Dorsolateral prefrontal cortex (tissue), 120 donors: ENCODE measurements at regions of chr2 and their contacts with region 1.

Region 1: GRCh38 chr2:218876562-218877219 is 4.0 kb upstream of the WNT10A start:
- DNase-seq: peak in 9 of 10 donors; percentile 51 to 85 (median 69)
- H3K4me3 ChIP-seq: no peak overlapping the region
- H3K27ac ChIP-seq: no peak overlapping the region
- H3K27me3 ChIP-seq: peaks cover 0 to 89% (median 61%) of the 10 kb centered on the region in 45 donors
- CTCF ChIP-seq: peak; percentile 83 to 99 (median 94)

Region 2: DNA sequence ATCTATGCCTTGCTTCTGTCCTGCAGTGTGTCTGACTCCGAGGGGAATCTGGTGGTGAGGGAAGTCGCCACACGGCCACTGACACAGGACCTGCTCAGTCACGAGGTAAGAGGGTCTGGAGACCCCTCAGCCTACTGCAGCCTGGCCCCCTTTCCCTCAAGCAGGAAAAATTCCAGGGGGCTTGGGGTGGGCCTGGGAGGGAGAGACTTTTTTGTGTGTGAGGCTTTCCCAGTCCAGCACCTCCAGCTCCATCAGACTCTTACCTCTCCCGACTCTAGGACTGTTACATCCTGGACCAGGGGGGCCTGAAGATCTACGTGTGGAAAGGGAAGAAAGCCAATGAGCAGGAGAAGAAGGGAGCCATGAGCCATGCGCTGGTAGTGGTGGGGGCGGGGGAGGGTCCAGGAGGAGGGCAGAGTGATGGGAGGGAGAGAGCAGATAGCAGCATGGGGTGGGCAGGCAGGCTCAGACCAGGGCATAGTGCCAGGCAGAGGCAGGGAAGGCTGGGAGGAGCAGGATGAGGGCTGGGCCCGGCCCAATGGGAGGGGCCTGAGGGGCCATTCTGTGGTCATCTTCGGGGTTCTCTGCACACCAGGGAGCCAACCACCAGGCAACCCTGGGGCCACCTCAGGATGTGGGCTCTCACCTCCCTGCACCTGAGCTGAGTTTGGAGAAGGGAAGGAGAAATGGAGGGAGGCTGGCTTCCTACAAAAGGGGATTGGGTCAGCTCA is 447.0 kb before region 1 on chr2:
- intact Hi-C with region 1: no loop called
- DNase-seq: peak in 4 of 10 donors; percentile 10 to 31 (median 20)
- H3K4me3 ChIP-seq: no peak overlapping the region
- H3K27ac ChIP-seq: no peak overlapping the region
- H3K27me3 ChIP-seq: no peaks in the 10 kb centered on the region
- CTCF ChIP-seq: no peak

Region 3: GRCh38 chr2:218557941-218558340 is 318.8 kb before region 1 on chr2:
- intact Hi-C with region 1: no loop called
- DNase-seq: no peak
- H3K4me3 ChIP-seq: no peak overlapping the region
- H3K27ac ChIP-seq: no peak overlapping the region
- H3K27me3 ChIP-seq: no peaks in the 10 kb centered on the region
- CTCF ChIP-seq: no peak

Region 4: DNA sequence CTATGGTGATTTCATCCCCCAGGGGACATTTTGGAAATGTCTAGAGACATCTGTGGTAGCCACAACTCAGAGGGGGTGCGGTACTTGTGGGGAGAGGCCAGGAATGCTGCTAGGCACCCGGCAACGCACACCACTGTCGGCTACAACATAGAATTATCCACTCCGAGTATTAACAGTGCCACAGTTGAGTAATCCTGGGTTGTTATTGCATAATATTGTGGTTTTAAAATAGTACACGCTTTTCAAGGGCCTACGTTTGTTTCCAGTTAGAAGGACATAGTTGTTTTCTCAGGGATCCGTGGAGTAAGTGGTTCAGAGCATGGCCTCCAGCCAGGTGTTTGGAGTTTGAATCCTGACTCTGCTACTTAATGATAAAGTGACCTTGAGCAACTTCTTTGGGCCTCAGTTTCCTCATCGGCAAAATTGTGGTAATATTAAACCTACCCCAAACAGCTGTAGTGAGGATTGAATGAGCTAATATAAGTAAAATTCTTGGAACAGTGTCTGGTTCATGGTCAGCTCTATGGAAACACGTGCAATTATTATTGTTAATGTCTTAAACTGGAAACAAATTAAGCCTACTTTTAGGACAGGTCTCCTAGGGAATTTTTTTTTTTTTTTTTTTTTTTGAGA is 70.2 kb before region 1 on chr2:
- intact Hi-C with region 1: no loop called
- DNase-seq: no peak
- H3K4me3 ChIP-seq: peak overlapping the region in 3 of 59 donors; percentile 9 to 14 (median 12)
- H3K27ac ChIP-seq: peak overlapping the region in 41 of 59 donors; percentile 1 to 78 (median 48)
- H3K27me3 ChIP-seq: no peaks in the 10 kb centered on the region
- CTCF ChIP-seq: no peak

Region 5: DNA sequence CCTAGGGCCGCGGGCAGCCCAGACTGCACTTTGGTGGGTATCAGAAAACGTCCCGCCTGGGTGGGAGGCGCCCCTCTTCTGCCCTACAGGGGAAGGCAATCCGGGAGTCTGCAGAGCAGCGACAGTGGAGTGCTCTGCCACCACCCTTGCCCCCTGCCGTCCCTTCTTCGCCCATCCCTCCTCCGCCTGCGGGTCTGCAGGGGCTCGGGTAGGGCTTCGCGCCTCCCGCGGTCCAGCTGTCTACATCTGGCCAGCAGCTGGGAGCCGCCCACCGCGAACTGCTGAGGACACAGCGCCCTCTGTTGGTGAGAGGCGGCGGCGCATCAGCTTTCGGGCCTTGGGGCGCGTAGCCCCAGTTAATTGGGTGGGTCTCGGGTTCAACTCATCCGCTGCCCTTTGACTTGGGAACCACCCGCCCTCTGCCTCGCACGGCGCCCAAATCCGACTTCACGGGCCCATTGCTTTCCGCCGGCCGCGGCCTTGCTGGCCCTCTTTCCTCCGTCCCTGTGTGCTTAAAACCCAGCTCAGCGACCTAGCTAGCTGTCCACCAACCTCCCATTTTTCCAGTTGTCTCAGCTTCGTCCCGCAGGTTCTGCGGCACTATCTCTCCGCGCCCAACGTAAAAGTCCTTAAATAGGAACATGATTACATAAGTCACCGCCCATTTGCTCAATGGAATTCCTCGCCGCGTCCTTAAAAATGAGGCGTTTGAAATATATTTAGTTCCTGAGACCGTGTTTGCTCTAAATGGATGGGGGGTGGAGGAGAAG is 21.6 kb after region 1 on chr2:
- intact Hi-C with region 1: loop called (anchors 1 kb)
- DNase-seq: peak in 9 of 10 donors; percentile 35 to 82 (median 62)
- H3K4me3 ChIP-seq: peak overlapping the region in 49 of 59 donors; percentile 3 to 57 (median 38)
- H3K27ac ChIP-seq: peak overlapping the region in 13 of 59 donors; percentile 12 to 62 (median 40)
- H3K27me3 ChIP-seq: peaks cover 0 to 83% (median 41%) of the 10 kb centered on the region in 45 donors
- CTCF ChIP-seq: peak; percentile 76 to 99 (median 97)

Region 6: DNA sequence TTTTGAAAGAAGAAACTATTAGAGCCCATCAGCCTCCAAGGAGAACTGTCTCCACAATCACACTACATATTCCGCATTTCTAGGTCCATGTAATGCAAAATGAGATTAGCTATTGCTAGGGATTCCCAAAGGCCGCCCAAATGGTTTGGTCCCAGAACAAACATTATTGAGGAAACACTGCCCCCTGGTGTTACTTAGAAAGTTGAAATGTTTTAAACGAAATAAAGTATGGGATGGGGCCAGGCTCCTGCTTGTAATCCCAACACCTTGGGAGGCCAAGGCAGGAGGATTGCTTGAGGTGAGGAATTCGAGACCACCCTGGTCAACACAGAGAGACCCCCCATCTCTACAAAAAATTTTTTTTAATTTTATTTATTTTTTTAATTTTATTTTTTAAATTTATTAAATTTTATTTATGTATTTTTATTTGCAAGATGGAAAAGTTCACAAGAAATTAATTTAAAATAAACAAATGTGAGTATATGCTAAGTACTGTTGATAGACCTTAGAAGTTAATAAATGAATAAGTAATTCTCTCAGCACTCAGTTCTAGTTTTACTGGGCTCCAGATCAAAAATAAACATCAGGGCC is 278.5 kb after region 1 on chr2:
- intact Hi-C with region 1: loop called in 1 of 2 experiments (anchors 10 kb)
- DNase-seq: peak in 2 of 10 donors; percentile 36 to 39
- H3K4me3 ChIP-seq: no peak overlapping the region
- H3K27ac ChIP-seq: no peak overlapping the region
- H3K27me3 ChIP-seq: no peaks in the 10 kb centered on the region
- CTCF ChIP-seq: peak; percentile 60 to 93 (median 78)